ENCODE measurements at regions of chr1 and their contacts with region 1.

Region 1: GRCh38 chr1:186482661-186483255 is 21.8 kb upstream of the PDC start:
- DNase-seq: peak; percentile 59
- ATAC-seq: peak; percentile 91
- H3K4me3 ChIP-seq: no peak overlapping the region
- H3K27ac ChIP-seq: no peak overlapping the region
- H3K4me1 ChIP-seq: no peaks in the 10 kb centered on the region
- H3K27me3 ChIP-seq: no peaks in the 10 kb centered on the region
- CTCF ChIP-seq: peak; percentile 64 to 94 (median 82); a peak in 5 of 6 replicates
- POLR2A ChIP-seq: no peak
- RAD21 ChIP-seq: peak; percentile 93

Region 2: GRCh38 chr1:186605762-186606350 is 123.1 kb after region 1 on chr1:
- CTCF ChIA-PET with region 1: interaction called, 3 read pairs
- POLR2A ChIA-PET with region 1: no interaction called
- RAD21 ChIA-PET with region 1: interaction called in 1 of 2 experiments, 5 read pairs
- intact Hi-C with region 1: loop called (anchors 2 kb)
- DNase-seq: peak; percentile 56
- ATAC-seq: peak; percentile 95
- H3K4me3 ChIP-seq: no peak overlapping the region
- H3K27ac ChIP-seq: no peak overlapping the region
- H3K4me1 ChIP-seq: no peaks in the 10 kb centered on the region
- H3K27me3 ChIP-seq: no peaks in the 10 kb centered on the region
- CTCF ChIP-seq: peak; percentile 67 to 89 (median 82); a peak in 5 of 6 replicates
- POLR2A ChIP-seq: no peak
- RAD21 ChIP-seq: peak; percentile 91

Region 3: GRCh38 chr1:186680245-186681061 is 197.7 kb after region 1 on chr1 and contains the start of gene PTGS2:
- CTCF ChIA-PET with region 1: interaction called, 4 read pairs
- POLR2A ChIA-PET with region 1: no interaction called
- RAD21 ChIA-PET with region 1: no interaction called
- intact Hi-C with region 1: loop called (anchors 2 kb)
- DNase-seq: peak; percentile 84
- ATAC-seq: peak; percentile 99
- H3K4me3 ChIP-seq: peak within 1 kb of the TSS; percentile 56 to 72
- H3K27ac ChIP-seq: peak within 1 kb of the TSS; percentile 51
- H3K4me1 ChIP-seq: peaks cover 0 to 16% of the 10 kb centered on the region in 2 experiments; a peak in 3 of 4 replicates
- H3K27me3 ChIP-seq: no peaks in the 10 kb centered on the region
- CTCF ChIP-seq: peak; percentile 30 to 62 (median 59); a peak in 5 of 6 replicates
- POLR2A ChIP-seq: no peak
- RAD21 ChIP-seq: peak; percentile 17; the same call in 1 of the 2 replicates
- total RNA-seq, gene PTGS2: 0.91 TPM

Region 4: DNA sequence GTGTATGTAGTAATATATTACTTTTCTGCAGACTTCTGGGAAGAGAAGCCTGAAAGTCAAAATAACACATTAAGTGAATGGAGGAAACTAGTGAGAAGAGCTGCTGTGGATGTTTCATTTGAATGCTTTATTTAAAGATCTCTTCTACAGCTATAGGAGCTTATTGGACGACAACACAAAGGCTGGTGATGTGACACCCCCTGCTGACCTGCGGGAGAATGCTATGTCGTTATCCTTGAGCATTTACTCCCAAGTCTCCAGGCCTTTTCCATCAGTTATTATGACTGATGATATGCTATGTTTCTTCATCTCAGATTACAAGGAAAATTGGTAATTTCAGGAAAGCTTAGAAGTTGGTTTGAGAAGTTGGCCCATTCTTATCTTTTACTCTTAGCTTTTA is 323.7 kb after region 1 on chr1:
- CTCF ChIA-PET with region 1: interaction called, 5 read pairs
- POLR2A ChIA-PET with region 1: interaction called, 3 read pairs
- RAD21 ChIA-PET with region 1: no interaction called
- intact Hi-C with region 1: loop called (anchors 1 kb)
- DNase-seq: peak; percentile 45
- ATAC-seq: peak; percentile 82
- H3K4me3 ChIP-seq: no peak overlapping the region
- H3K27ac ChIP-seq: no peak overlapping the region
- H3K4me1 ChIP-seq: no peaks in the 10 kb centered on the region
- H3K27me3 ChIP-seq: no peaks in the 10 kb centered on the region
- CTCF ChIP-seq: peak; percentile 38 to 56 (median 45); a peak in 5 of 6 replicates
- POLR2A ChIP-seq: no peak
- RAD21 ChIP-seq: peak; percentile 74

Measured in HCT116 (cell line).